ENCODE measurements at regions of chr20 and their contacts with region 1.

Region 1: GRCh38 chr20:45322952-45323383 is 14.9 kb upstream of the MATN4 start:
- DNase-seq: no peak
- H3K4me3 ChIP-seq: no peak overlapping the region
- H3K4me3 Mint-ChIP-seq: no peak overlapping the region
- H3K27ac ChIP-seq: no peak overlapping the region
- H3K27ac Mint-ChIP-seq: peak overlapping the region in 1 of 8 donors; percentile 89
- H3K4me1 ChIP-seq: peaks cover 26% of the 10 kb centered on the region
- H3K4me1 Mint-ChIP-seq: peaks cover 20 to 25% (median 22%) of the 10 kb centered on the region in 3 donors
- H3K27me3 ChIP-seq: no peaks in the 10 kb centered on the region
- H3K27me3 Mint-ChIP-seq: no peaks in the 10 kb centered on the region

Region 2: DNA sequence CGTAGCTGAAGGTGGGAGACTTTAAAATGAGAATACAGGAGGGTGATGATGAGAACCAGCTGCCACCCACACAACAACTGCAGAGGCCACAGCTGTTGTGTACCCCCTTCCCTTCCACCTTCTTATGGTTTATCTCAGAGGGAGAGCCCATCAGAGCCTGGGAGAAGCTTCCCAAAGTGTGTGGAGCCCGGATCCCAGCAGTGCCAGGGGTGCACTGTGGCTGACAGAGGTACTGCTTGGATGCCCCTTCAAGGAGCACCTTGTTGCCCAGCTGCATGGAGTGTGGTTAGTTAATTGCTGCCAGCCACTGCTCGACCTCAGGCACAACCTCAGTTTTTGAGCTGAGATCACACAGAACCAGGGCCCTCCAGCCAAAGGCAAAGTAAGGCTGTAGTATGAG is 135.3 kb before region 1 on chr20:
- CTCF ChIA-PET with region 1: no interaction called
- POLR2A ChIA-PET with region 1: no interaction called
- DNase-seq: no peak
- H3K4me3 ChIP-seq: no peak overlapping the region
- H3K4me3 Mint-ChIP-seq: no peak overlapping the region
- H3K27ac ChIP-seq: no peak overlapping the region
- H3K27ac Mint-ChIP-seq: no peak overlapping the region
- H3K4me1 ChIP-seq: no peaks in the 10 kb centered on the region
- H3K4me1 Mint-ChIP-seq: no peaks in the 10 kb centered on the region
- H3K27me3 ChIP-seq: no peaks in the 10 kb centered on the region
- H3K27me3 Mint-ChIP-seq: peaks cover 11 to 12% of the 10 kb centered on the region in 2 donors

Region 3: DNA sequence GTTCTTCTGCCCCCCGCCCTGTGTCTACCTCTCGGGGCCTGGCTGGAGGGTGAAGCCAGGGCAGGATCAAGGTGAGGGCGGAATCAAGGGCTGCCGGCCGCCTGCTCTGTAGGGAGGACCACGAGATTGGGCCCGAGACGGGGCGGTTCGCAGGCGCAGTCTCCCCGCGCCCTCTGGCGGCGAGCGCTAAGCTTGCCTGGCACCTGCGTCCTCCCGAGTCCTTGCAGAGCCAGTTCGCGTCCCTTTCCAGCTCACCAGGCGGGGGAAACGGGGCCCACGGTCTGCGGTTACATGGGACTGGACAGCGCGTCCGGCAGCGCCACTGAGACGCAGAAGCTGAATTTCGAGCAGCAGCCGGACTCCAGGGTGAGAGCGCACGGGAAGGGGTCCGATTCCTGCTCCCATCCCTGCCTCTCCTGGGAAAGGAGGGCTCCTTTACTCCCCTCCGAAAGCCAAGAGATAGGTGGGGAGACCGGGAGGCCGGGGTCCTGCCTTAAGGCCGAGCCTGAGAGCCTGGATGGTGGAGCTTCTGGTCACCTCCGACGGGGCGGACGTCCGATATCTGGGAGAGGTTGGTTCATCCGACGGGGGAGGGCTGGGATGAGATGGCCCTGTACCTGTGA is 11.3 kb before region 1 on chr20:
- CTCF ChIA-PET with region 1: interaction called, 11 read pairs
- POLR2A ChIA-PET with region 1: no interaction called
- DNase-seq: peak; percentile 18 to 62 (median 25)
- H3K4me3 ChIP-seq: no peak overlapping the region
- H3K4me3 Mint-ChIP-seq: peak overlapping the region in 1 of 7 donors; percentile 72
- H3K27ac ChIP-seq: no peak overlapping the region
- H3K27ac Mint-ChIP-seq: no peak overlapping the region
- H3K4me1 ChIP-seq: no peaks in the 10 kb centered on the region
- H3K4me1 Mint-ChIP-seq: peaks cover 0 to 12% (median 11%) of the 10 kb centered on the region in 3 donors
- H3K27me3 ChIP-seq: peaks cover 2% of the 10 kb centered on the region
- H3K27me3 Mint-ChIP-seq: peaks cover 38 to 72% of the 10 kb centered on the region in 2 donors

Region 4: DNA sequence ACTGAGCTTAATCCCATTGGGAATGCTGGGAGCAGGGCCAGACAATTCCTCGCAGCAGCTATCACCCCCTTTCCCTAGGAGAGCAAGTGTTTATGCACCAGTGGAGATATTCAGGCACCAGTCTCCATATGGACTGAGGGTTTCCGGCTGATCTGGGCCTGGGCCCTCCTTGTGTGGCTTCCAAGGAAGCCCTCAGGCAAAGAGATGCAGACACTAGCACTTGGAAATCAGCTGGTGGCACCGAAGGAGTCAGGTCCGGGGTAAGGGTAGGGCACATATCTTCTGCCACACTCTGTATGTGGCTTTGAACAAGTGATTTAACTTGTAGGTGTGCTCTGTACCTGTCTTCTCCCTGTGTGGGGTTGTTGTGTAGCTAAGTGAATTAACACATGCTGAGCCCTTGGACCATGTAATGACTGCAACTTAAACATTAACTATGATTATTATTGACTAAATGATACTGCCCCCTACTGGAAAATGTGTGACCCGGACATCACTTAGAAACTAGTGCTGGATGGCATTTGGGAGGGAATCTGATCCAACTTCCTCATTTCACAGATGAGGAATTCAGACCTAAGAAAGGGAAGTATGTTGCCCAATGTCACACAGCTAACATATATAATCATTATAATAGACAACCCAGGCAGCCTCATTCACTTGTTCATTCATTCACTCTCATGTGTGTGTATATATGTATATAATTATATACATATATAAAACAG is 127.3 kb after region 1 on chr20:
- CTCF ChIA-PET with region 1: interaction called, 41 read pairs
- POLR2A ChIA-PET with region 1: no interaction called
- DNase-seq: peak in 2 of 5 donors; percentile 30 to 32
- H3K4me3 ChIP-seq: no peak overlapping the region
- H3K4me3 Mint-ChIP-seq: no peak overlapping the region
- H3K27ac ChIP-seq: no peak overlapping the region
- H3K27ac Mint-ChIP-seq: no peak overlapping the region
- H3K4me1 ChIP-seq: no peaks in the 10 kb centered on the region
- H3K4me1 Mint-ChIP-seq: peaks cover 5 to 9% (median 8%) of the 10 kb centered on the region in 3 donors
- H3K27me3 ChIP-seq: no peaks in the 10 kb centered on the region
- H3K27me3 Mint-ChIP-seq: peaks cover 8 to 21% of the 10 kb centered on the region in 2 donors

Measured in CD8-positive, alpha-beta memory T cell (primary cell).